HEK293 (cell line): ENCODE measurements at regions of chr1 and their contacts with region 1.

Region 1: DNA sequence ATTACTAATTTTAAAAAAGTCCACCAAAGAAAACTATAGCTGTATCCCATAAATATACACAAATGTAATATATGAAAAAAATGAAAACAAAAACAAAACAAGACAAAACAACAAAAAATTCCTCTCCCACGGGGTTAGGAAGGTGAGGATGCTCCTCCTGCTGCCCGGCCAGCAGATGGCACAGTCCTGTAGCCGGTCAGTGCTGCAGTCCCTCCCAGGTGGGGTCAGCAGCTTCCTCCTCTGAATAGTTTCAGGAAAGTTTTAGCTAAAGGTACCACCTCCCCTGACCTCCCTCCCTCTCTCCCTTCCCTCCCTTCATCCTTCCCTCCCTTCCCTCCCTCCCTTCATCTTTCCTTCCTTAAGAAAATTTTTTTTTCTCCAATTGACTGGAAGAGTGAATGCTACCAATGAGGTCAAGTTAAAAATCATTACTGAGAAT is 67.8 kb upstream of the BCL10 start:
- H3K4me3 ChIP-seq: no peak overlapping the region
- H3K27ac ChIP-seq: no peak overlapping the region
- H3K4me1 ChIP-seq: peaks cover 21% of the 10 kb centered on the region
- CTCF ChIP-seq: peak; percentile 78

Region 2: DNA sequence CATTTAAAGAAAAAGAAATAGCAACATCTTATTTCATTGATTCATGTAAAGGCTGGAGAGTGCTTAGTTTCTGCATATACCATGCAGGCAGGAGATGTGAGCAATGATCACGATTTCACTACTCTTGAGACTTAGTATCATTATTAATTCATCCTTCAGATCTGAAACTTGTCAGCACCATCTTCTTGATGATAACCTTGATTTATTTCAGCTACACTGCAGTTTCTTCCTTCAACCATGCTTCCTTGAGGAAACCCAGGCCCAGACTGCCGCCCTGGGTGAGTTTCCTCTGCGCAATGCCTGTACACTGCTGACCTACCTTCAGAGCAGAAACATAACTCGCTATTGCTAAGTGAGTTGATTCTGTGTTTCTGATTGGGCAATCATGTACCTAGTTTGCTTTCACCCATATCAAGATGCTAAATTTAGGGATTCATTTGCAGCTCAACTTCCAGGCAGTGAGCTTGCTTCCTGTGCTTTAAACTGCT is 54.4 kb before region 1 on chr1:
- CTCF ChIA-PET with region 1: no interaction called
- POLR2A ChIA-PET with region 1: no interaction called
- H3K4me3 ChIP-seq: no peak overlapping the region
- H3K27ac ChIP-seq: no peak overlapping the region
- H3K4me1 ChIP-seq: peaks cover 1% of the 10 kb centered on the region; the same call in 1 of the 2 replicates
- CTCF ChIP-seq: no peak

Region 3: DNA sequence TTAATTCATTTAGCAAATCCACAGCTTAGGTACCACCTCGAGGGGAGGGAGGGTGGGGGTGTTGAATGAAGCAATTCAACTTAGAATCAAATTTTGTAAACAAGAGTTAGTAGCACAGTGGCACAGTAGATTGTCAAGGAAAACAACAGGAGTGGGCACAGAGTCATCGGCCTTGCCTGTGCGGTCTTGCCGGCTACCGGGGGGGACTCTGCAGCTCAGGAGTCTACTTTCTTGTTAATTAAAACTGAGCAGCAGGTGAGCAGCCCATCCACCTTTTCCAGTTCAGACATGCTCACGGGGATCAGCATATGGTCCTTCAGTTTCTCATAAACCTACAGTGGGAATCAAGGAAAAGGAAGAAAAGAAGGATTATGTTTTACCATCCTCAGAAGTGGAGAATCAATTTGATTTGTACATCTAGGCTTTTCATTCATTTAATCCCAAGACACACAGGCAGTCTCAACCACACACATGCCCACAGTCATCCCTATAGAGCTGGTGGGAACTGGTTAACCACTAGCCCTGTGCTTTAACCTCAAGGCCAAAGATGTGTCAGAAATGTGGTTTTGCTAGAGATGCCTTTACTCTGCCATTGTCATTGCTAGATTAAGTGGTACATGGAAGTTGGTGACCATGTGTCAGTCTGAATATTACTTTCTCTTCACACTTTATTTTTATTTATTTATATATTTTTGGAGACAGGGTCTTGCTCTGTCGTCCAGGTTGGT is 22.9 kb before region 1 on chr1:
- CTCF ChIA-PET with region 1: interaction called, 12 read pairs
- POLR2A ChIA-PET with region 1: no interaction called
- H3K4me3 ChIP-seq: no peak overlapping the region
- H3K27ac ChIP-seq: no peak overlapping the region
- H3K4me1 ChIP-seq: peaks cover under 1% of the 10 kb centered on the region; the same call in 1 of the 2 replicates
- CTCF ChIP-seq: no peak

Region 4: GRCh38 chr1:85330711-85331290 is 13.5 kb before region 1 on chr1:
- CTCF ChIA-PET with region 1: interaction called, 18 read pairs
- POLR2A ChIA-PET with region 1: no interaction called
- H3K4me3 ChIP-seq: no peak overlapping the region
- H3K27ac ChIP-seq: no peak overlapping the region
- H3K4me1 ChIP-seq: no peaks in the 10 kb centered on the region
- CTCF ChIP-seq: no peak

Region 5: DNA sequence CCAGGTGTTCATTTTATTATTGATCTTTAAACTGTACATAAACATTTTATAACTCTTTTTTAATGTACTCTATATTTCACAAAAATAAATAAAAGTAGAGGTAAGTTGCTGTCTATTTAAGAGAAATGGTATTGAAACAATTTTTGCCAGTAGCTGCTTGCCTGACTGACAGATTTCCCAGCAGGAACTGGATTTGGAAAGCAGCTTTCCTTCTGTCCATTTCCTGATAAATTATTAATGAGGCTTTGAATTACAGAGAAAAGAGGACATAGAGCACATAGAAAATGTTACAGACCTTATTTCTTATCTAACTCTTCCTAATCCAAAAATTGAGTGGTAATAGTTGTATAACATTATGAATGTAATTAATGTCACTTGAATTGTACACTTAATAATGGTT is 11.9 kb after region 1 on chr1:
- CTCF ChIA-PET with region 1: interaction called, 11 read pairs
- POLR2A ChIA-PET with region 1: no interaction called
- H3K4me3 ChIP-seq: no peak overlapping the region
- H3K27ac ChIP-seq: no peak overlapping the region
- H3K4me1 ChIP-seq: no peaks in the 10 kb centered on the region
- CTCF ChIP-seq: no peak

Region 6: GRCh38 chr1:85372683-85373446 is 28.6 kb after region 1 on chr1:
- CTCF ChIA-PET with region 1: interaction called, 13 read pairs
- POLR2A ChIA-PET with region 1: no interaction called
- H3K4me3 ChIP-seq: no peak overlapping the region
- H3K27ac ChIP-seq: no peak overlapping the region
- H3K4me1 ChIP-seq: no peaks in the 10 kb centered on the region
- CTCF ChIP-seq: no peak

Region 7: GRCh38 chr1:85818371-85818770 is 474.1 kb after region 1 on chr1:
- CTCF ChIA-PET with region 1: no interaction called
- POLR2A ChIA-PET with region 1: no interaction called
- H3K4me3 ChIP-seq: no peak overlapping the region
- H3K27ac ChIP-seq: no peak overlapping the region
- H3K4me1 ChIP-seq: no peaks in the 10 kb centered on the region
- CTCF ChIP-seq: no peak